ENCODE measurements at regions of chr2 and their contacts with region 1.

Region 1: DNA sequence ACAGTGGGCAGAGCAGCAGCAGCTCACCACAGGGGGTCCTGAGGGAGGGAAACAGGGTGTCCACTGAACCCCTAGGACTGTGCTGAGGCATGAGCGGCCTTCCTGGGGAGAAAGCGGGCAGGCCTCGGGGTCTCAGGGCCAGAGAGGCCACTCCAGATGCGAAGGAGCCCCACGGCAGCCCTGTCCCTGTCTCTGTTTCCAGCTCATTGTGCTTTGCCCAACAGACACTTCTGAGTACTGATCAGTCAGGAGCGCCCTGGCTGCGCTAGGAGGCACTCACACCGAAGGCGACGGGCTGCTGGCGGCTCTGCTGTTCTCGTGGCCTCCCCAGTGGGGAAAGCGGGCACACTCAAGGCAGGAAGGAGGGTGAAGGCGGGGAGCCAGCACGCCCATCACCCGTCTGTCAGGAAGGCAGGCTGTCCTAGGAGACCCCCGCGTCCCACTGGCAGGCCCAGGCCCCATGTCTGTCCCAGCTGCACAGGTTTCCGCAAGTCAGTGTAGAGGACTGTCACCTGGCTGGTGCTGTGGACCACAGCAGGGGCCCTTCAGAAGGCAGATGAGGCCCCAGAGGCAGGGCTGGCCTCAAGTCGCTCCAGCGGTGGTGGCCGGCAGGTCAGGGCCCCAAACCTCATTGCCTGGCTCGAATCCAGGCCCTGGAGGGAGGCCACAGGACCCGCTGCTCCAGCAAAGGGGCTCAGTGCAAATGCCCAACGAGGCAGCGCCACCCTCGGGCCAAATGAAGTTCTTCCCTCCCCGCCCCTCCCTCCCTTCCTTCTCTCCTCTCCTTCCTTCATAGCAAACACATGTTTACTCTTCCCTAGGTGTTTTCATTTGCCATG is 6.8 kb downstream of the ESPNL start:
- DNase-seq: no peak
- ATAC-seq: peak; percentile 36
- H3K4me3 ChIP-seq: peak overlapping the region; percentile 26; the same call in 1 of the 2 replicates
- H3K27ac ChIP-seq: peak overlapping the region; percentile 62
- H3K4me1 ChIP-seq: peaks cover 21% of the 10 kb centered on the region
- H3K27me3 ChIP-seq: no peaks in the 10 kb centered on the region
- CTCF ChIP-seq: peak; percentile 40 to 62 (median 49)
- EP300 ChIP-seq: no peak
- POLR2A ChIP-seq: no peak
- RAD21 ChIP-seq: peak; percentile 37; the same call in 1 of the 2 replicates

Region 2: DNA sequence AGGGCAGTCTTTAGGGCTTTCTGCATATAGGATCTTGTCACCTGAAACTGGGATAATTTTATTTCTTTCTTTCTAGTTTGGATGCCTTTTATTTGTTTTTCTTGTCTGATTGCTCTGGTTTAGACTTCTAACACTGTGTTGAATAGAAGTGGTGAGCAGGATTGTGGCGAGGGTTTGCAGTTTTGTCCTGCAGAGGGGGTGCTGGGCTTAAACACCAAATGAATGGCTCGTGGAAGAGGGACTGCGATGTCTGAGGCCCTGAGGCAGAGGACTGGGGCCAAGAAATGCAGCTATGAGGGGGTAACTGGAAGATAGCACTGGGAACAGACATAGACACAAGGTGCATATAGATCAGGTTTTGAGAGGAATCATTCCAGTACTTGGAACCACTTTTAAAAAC is 119.6 kb before region 1 on chr2:
- CTCF ChIA-PET with region 1: no interaction called
- POLR2A ChIA-PET with region 1: no interaction called
- RAD21 ChIA-PET with region 1: no interaction called
- SMC1A ChIA-PET with region 1: no interaction called
- in situ Hi-C with region 1: no loop called
- intact Hi-C with region 1: no loop called
- DNase-seq: no peak
- ATAC-seq: no peak
- H3K4me3 ChIP-seq: no peak overlapping the region
- H3K27ac ChIP-seq: no peak overlapping the region
- H3K4me1 ChIP-seq: no peaks in the 10 kb centered on the region
- H3K27me3 ChIP-seq: no peaks in the 10 kb centered on the region
- CTCF ChIP-seq: no peak
- EP300 ChIP-seq: no peak
- POLR2A ChIP-seq: no peak
- RAD21 ChIP-seq: no peak

Region 3: DNA sequence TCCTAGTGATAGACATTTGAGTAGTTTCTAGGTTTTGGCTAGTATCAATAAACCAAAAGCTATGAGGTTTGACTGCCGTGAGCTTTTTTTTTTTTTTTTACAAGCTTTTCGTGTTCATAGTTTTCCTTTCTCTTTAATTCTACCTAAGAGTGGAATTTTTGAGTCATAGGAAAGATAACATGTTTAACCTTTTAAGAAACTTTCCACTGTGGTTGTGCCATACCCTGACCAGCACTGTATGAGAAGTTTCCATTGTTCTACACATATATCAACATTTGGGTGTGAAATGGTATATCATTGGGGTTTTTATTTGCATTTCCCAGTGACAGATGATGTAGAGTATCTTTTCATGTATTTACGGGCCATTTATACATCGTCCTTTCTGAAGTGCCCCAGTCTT is 108.4 kb before region 1 on chr2:
- CTCF ChIA-PET with region 1: interaction called, 12 read pairs
- POLR2A ChIA-PET with region 1: interaction called, 3 read pairs
- RAD21 ChIA-PET with region 1: interaction called, 10 read pairs
- SMC1A ChIA-PET with region 1: interaction called, 8 read pairs
- in situ Hi-C with region 1: no loop called
- intact Hi-C with region 1: no loop called
- DNase-seq: peak; percentile 82
- ATAC-seq: peak; percentile 98
- H3K4me3 ChIP-seq: peak overlapping the region; percentile 41; the same call in 1 of the 2 replicates
- H3K27ac ChIP-seq: 0 out of 2 replicates have a peak overlapping the region, but pooled peaks have one; percentile 1
- H3K4me1 ChIP-seq: no peaks in the 10 kb centered on the region
- H3K27me3 ChIP-seq: no peaks in the 10 kb centered on the region
- CTCF ChIP-seq: no peak
- EP300 ChIP-seq: peak; percentile 91 to 92
- POLR2A ChIP-seq: no peak
- RAD21 ChIP-seq: no peak

Region 4: DNA sequence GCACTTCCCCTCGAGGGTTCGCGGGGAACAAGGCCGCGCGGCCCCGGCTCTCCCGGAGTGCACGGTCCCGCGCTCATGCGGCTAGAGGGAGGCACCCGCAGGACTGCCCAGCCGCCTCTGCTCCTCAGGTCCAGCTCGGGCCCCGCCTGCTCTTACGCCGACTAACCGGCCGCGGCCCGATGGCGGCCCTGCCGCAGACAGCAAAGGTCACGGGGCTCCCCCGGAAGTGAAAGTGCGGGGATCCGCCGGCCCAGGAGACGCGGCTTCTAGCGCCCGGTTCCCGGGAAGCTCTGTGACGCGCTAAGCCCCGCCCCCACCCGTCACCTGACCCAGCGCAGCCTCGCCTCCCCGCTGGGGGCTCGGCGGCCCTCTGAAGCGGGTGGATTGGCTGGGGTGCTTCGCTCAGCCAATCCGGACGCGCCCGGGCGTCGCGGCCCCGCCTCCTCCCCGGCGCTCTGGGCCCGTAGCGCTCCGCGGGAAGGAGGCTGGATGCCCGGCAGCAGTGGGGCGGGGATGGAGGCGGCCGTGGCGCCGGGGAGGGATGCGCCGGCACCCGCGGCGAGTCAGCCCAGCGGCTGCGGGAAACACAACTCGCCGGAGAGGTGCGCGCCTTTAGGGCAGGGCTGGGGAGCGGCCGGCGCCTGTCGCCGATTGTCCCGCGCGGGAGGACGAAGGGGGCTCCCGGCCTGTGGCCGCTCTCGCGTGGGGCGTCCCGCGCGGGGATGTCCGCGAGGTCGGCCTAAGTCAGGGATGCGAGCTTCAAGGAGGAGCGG is 46.2 kb before region 1 on chr2 and contains the start of gene SCLY:
- CTCF ChIA-PET with region 1: interaction called, 5 read pairs
- POLR2A ChIA-PET with region 1: interaction called, 13 read pairs
- RAD21 ChIA-PET with region 1: interaction called, 10 read pairs
- SMC1A ChIA-PET with region 1: interaction called, 13 read pairs
- in situ Hi-C with region 1: no loop called
- intact Hi-C with region 1: loop called (anchors 5 kb)
- DNase-seq: peak; percentile 87
- ATAC-seq: peak; percentile 97
- H3K4me3 ChIP-seq: peak within 1 kb of the TSS; percentile 96
- H3K27ac ChIP-seq: peak within 1 kb of the TSS; percentile 76
- H3K4me1 ChIP-seq: no peaks in the 10 kb centered on the region; the same call in none of the 2 replicates
- H3K27me3 ChIP-seq: no peaks in the 10 kb centered on the region
- CTCF ChIP-seq: no peak
- EP300 ChIP-seq: no peak
- POLR2A ChIP-seq: peak; percentile 93
- RAD21 ChIP-seq: no peak
- polyA plus RNA-seq, gene SCLY: 3.3 to 3.6 TPM

Region 5: GRCh38 chr2:238139196-238140039 is 32.5 kb after region 1 on chr2:
- CTCF ChIA-PET with region 1: interaction called, 17 read pairs
- POLR2A ChIA-PET with region 1: no interaction called
- RAD21 ChIA-PET with region 1: no interaction called
- SMC1A ChIA-PET with region 1: interaction called, 3 read pairs
- in situ Hi-C with region 1: no loop called
- intact Hi-C with region 1: no loop called
- DNase-seq: no peak
- ATAC-seq: peak; percentile 75
- H3K4me3 ChIP-seq: no peak overlapping the region
- H3K27ac ChIP-seq: no peak overlapping the region
- H3K4me1 ChIP-seq: peaks cover 4% of the 10 kb centered on the region; the same call in 1 of the 2 replicates
- H3K27me3 ChIP-seq: no peaks in the 10 kb centered on the region
- CTCF ChIP-seq: peak; percentile 53 to 81 (median 67)
- EP300 ChIP-seq: no peak
- POLR2A ChIP-seq: no peak
- RAD21 ChIP-seq: peak; percentile 38

Region 6: DNA sequence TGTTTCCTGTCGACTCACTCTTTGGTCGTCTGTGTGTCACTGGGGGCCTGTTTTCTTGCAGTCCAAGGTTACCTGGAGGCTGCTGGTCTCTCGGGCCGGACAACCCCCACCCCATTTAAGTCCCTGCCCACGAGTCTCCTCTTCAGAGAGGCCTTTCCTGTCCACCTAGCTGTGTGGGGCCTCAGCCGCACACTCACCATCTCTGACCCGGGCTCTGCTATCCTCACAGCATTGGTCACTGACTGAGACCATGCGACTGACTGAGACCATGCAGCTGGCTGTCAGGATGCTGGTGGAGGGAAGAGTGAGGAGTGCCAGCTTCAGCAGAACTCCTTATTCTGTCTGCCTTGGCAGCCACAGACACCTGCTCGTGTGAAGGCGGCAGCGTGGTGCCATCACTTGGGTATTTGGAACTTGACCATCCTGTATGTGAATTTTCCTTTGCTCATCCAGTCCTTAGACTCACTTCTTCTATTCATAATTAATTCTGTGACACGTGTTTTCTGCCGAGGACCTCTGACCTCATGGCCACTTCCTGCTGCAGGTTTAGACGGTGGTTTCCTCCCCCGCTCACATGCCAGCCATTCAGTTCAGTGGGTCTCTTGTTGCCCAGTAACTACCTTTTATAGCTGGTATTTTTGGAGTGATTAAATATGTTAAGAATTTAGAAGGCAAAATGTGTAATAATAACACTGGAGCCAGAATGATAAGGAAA is 272.3 kb after region 1 on chr2:
- CTCF ChIA-PET with region 1: no interaction called
- POLR2A ChIA-PET with region 1: no interaction called
- RAD21 ChIA-PET with region 1: no interaction called
- SMC1A ChIA-PET with region 1: no interaction called
- in situ Hi-C with region 1: no loop called
- intact Hi-C with region 1: no loop called
- DNase-seq: no peak
- ATAC-seq: peak; percentile 49
- H3K4me3 ChIP-seq: no peak overlapping the region
- H3K27ac ChIP-seq: no peak overlapping the region
- H3K4me1 ChIP-seq: peaks cover 8% of the 10 kb centered on the region
- H3K27me3 ChIP-seq: no peaks in the 10 kb centered on the region
- CTCF ChIP-seq: no peak
- EP300 ChIP-seq: no peak
- POLR2A ChIP-seq: no peak
- RAD21 ChIP-seq: no peak

Region 7: DNA sequence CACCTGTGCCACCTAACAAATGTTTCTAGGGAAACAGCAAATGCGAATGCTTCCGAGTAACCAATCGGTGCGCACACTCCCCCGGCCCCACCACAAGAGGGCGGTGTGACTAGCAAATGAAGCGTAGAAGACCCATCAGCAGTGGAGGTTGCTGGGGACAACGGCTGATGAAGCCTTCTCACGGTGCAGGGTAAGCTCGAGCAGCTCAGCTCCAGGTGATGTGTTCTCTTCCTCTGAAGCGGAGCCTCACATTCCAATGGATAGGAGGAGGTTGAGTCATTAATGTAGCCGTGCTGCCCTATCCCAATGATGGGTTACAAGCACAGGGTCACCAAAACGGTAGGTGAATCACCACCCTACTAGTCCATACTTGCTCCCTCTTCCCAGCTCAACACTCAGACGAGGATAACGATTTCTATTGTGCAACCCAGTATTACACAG is 613.3 kb after region 1 on chr2:
- CTCF ChIA-PET with region 1: no interaction called
- POLR2A ChIA-PET with region 1: no interaction called
- RAD21 ChIA-PET with region 1: no interaction called
- SMC1A ChIA-PET with region 1: no interaction called
- in situ Hi-C with region 1: no loop called
- intact Hi-C with region 1: no loop called
- DNase-seq: no peak
- ATAC-seq: no peak
- H3K4me3 ChIP-seq: no peak overlapping the region
- H3K27ac ChIP-seq: no peak overlapping the region
- H3K4me1 ChIP-seq: no peaks in the 10 kb centered on the region
- H3K27me3 ChIP-seq: no peaks in the 10 kb centered on the region
- CTCF ChIP-seq: peak; percentile 27 to 44 (median 40)
- EP300 ChIP-seq: no peak
- POLR2A ChIP-seq: no peak
- RAD21 ChIP-seq: no peak

Measured in GM12878 (cell line).